ENCODE measurements at regions of chr13 and their contacts with region 1.

Region 1: DNA sequence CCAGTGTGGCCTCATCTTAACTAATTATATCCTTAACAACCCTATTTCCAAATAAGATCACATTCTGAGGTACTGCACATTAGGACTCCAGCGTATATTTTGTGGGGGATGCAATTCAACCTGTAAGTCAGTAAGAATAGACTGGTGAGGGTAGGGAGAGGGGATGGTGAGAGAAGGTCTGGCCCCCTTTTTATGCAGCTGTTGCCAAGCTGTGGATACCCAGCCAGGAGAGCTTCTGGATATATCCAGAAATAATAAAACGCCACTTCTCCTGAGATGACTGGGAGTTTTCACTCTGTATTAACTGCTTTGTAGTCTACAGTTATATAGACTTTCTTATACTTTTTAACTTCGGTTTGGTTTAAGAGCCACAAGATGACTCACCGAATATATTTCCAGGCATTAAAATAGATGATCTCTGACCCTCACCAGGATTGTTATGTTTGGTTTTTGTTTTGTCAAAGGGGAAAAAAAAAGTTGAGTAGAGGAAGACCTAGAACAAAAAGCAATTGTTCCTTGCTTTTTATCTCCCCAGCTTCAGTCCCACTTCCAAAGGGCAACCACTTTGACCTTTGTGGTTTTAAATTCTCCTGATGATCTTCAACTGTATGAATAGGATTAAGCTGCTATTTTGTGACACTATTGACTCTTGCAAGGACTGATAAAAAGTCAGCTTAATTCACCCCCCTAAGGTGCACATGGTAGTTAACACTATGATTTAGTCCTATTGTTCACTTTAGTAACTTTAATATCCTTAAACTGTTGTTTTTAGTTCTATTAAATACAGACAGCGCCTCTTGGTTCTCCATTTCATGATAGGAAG is 3.1 kb upstream of the NEK3 start:
- DNase-seq: peak; percentile 70
- ATAC-seq: peak; percentile 50
- H3K4me3 ChIP-seq: no peak overlapping the region
- H3K27ac ChIP-seq: no peak overlapping the region
- H3K4me1 ChIP-seq: peaks cover 7% of the 10 kb centered on the region
- H3K27me3 ChIP-seq: no peaks in the 10 kb centered on the region
- CTCF ChIP-seq: no peak
- POLR2A ChIP-seq: no peak
- RAD21 ChIP-seq: no peak

Region 2: DNA sequence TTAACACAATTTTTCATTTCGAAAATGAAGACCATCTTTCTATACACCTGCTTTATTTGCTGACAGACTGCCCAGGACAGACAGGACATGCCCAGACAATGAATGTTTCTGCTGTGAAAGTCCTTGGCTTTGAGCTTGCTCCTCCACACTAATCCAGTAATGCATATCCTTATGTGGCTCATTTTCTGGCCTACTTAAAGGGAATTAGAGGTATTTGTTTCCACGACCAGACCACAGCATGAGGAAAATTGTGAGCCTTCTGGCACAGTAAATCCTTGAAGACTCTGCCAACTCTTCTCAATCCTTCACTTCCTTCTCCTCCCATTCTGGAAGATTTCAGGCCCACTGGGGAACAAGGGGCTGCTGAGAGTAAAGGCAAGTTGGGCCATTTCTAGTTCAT is 275.0 kb before region 1 on chr13:
- CTCF ChIA-PET with region 1: no interaction called
- POLR2A ChIA-PET with region 1: no interaction called
- dilution Hi-C with region 1: no loop called
- in situ Hi-C with region 1: no loop called
- intact Hi-C with region 1: no loop called
- DNase-seq: no peak
- ATAC-seq: no peak
- H3K4me3 ChIP-seq: no peak overlapping the region
- H3K27ac ChIP-seq: no peak overlapping the region
- H3K4me1 ChIP-seq: no peaks in the 10 kb centered on the region
- H3K27me3 ChIP-seq: peaks cover 20% of the 10 kb centered on the region
- CTCF ChIP-seq: no peak
- POLR2A ChIP-seq: no peak
- RAD21 ChIP-seq: no peak

Region 3: GRCh38 chr13:52061587-52061986 is 100.9 kb before region 1 on chr13:
- CTCF ChIA-PET with region 1: no interaction called
- POLR2A ChIA-PET with region 1: no interaction called
- dilution Hi-C with region 1: no loop called
- in situ Hi-C with region 1: no loop called
- intact Hi-C with region 1: no loop called
- DNase-seq: no peak
- ATAC-seq: no peak
- H3K4me3 ChIP-seq: no peak overlapping the region
- H3K27ac ChIP-seq: no peak overlapping the region
- H3K4me1 ChIP-seq: no peaks in the 10 kb centered on the region
- H3K27me3 ChIP-seq: no peaks in the 10 kb centered on the region
- CTCF ChIP-seq: no peak
- POLR2A ChIP-seq: no peak
- RAD21 ChIP-seq: no peak

Region 4: DNA sequence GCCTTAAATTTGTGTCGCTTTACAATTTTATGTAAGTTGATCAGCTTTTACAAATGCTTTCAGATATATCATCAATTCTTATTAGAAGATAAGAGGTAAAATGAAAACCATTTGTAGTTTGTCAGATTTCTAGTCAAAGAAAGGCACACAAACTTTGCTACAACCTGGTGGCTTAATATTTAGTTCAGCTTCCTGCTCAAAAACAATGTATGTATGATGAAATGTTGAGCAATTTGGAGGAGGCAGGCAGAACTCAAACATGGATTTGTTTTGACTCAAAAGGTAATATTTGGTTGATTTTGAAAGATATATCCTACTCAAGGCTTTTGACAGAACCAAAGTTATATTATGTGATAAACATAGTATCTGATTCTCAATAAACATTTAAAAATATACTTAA is 57.9 kb before region 1 on chr13:
- CTCF ChIA-PET with region 1: no interaction called
- POLR2A ChIA-PET with region 1: interaction called, 20 read pairs
- dilution Hi-C with region 1: no loop called
- in situ Hi-C with region 1: no loop called
- intact Hi-C with region 1: no loop called
- DNase-seq: peak; percentile 7
- ATAC-seq: no peak
- H3K4me3 ChIP-seq: no peak overlapping the region
- H3K27ac ChIP-seq: no peak overlapping the region
- H3K4me1 ChIP-seq: no peaks in the 10 kb centered on the region
- H3K27me3 ChIP-seq: no peaks in the 10 kb centered on the region; the same call in 1 of the 2 replicates
- CTCF ChIP-seq: no peak
- POLR2A ChIP-seq: no peak
- RAD21 ChIP-seq: no peak